CD8-positive, alpha-beta T cell (primary cell): ENCODE measurements at regions of chrX and their contacts with region 1.

Region 1: GRCh38 chrX:73262992-73263391 is 48.3 kb upstream of the NAP1L2 start:
- DNase-seq: peak in 2 of 9 experiments; percentile 12 to 34
- ATAC-seq: no peak
- H3K4me3 ChIP-seq: no peak overlapping the region
- H3K4me3 Mint-ChIP-seq: no peak overlapping the region
- H3K27ac ChIP-seq: no peak overlapping the region
- H3K27ac Mint-ChIP-seq: no peak overlapping the region
- H3K4me1 ChIP-seq: no peaks in the 10 kb centered on the region
- H3K4me1 Mint-ChIP-seq: no peaks in the 10 kb centered on the region
- H3K27me3 ChIP-seq: no peaks in the 10 kb centered on the region
- H3K27me3 Mint-ChIP-seq: peaks cover 9% of the 10 kb centered on the region
- CTCF ChIP-seq: no peak

Region 2: GRCh38 chrX:72245461-72246089 is 1017.4 kb before region 1 on chrX:
- CTCF ChIA-PET with region 1: no interaction called
- POLR2A ChIA-PET with region 1: no interaction called
- intact Hi-C with region 1: loop called in 1 of 2 experiments (anchors 2 kb)
- DNase-seq: peak in 7 of 9 experiments; percentile 10 to 62 (median 42)
- ATAC-seq: no peak
- H3K4me3 ChIP-seq: no peak overlapping the region
- H3K4me3 Mint-ChIP-seq: no peak overlapping the region
- H3K27ac ChIP-seq: no peak overlapping the region
- H3K27ac Mint-ChIP-seq: no peak overlapping the region
- H3K4me1 ChIP-seq: no peaks in the 10 kb centered on the region
- H3K4me1 Mint-ChIP-seq: no peaks in the 10 kb centered on the region
- H3K27me3 ChIP-seq: no peaks in the 10 kb centered on the region
- H3K27me3 Mint-ChIP-seq: no peaks in the 10 kb centered on the region
- CTCF ChIP-seq: peak; percentile 52

Region 3: DNA sequence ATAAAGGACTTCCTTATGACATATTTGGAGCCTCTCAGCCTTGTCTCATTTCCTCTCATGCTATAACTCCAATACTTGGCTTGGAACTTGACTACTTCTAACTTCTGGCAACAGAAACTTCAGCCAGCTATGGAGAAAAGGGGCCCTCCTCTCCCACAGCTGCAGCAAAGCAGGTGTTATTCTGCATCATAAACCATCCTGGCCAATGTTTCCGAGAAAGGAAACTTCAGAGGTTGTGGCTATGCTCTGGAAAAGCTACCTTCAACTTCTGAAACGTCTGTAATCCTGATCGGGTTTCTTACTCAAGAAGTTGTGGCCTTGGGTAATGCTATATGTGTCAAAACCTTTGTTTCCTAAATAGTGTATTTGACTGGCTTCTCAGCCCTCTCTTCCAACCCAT is 74.4 kb after region 1 on chrX:
- CTCF ChIA-PET with region 1: no interaction called
- POLR2A ChIA-PET with region 1: no interaction called
- intact Hi-C with region 1: no loop called
- DNase-seq: no peak
- ATAC-seq: no peak
- H3K4me3 ChIP-seq: no peak overlapping the region
- H3K4me3 Mint-ChIP-seq: no peak overlapping the region
- H3K27ac ChIP-seq: no peak overlapping the region
- H3K27ac Mint-ChIP-seq: no peak overlapping the region
- H3K4me1 ChIP-seq: no peaks in the 10 kb centered on the region
- H3K4me1 Mint-ChIP-seq: no peaks in the 10 kb centered on the region
- H3K27me3 ChIP-seq: no peaks in the 10 kb centered on the region
- H3K27me3 Mint-ChIP-seq: no peaks in the 10 kb centered on the region
- CTCF ChIP-seq: no peak